Cardiac septum (tissue), 1 donor: ENCODE measurements at regions of chr10 and their contacts with region 1.

Region 1: DNA sequence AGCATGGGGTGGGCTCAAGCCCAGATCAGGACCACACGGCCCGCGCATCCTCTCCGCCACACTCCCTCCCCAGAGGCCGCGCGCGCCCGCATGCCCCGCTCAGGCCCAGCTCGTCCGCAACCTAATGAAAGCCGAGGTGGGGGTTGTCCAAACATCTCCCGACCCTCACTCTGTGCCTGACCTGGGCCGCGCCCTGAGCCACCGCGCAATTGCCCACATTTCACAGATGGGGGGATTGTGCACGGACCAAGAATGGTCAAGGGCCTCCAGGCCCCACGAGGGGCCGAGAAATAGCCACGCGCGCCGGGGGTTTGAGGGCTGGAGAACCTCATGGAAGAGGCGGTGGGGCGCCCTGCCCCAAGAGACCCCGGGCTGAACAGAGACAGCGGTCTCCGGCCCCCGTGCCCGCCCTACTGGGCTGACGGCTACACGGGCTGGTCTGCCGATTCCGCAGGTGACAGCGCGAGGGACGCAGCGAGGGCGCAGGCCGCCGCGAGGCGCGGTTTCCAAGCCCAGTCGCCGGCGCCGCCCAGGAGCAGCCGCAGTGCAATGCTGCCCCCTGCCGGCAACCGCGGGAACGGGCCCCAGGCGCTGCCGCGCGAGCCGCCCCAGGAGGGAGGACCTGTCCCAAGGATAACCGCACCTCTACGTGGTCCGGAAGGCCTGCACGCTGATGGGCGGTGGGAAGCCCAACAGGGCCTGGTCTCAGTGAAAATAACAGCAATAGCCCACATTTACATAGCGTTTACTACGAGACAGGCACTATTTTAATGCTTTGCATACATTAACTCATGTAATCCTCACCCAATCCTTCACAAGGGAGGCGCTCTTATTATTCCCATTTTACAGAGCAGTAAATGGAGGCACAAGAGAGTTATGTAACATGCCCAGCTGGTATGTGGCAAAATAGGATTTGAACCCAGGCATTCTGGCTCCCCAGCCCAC is 10.5 kb upstream of the GRID1 start:
- DNase-seq: peak; percentile 89

Region 2: GRCh38 chr10:85548034-85548433 is 829.1 kb before region 1 on chr10:
- intact Hi-C with region 1: loop called (anchors 10 kb)
- DNase-seq: no peak

Region 3: DNA sequence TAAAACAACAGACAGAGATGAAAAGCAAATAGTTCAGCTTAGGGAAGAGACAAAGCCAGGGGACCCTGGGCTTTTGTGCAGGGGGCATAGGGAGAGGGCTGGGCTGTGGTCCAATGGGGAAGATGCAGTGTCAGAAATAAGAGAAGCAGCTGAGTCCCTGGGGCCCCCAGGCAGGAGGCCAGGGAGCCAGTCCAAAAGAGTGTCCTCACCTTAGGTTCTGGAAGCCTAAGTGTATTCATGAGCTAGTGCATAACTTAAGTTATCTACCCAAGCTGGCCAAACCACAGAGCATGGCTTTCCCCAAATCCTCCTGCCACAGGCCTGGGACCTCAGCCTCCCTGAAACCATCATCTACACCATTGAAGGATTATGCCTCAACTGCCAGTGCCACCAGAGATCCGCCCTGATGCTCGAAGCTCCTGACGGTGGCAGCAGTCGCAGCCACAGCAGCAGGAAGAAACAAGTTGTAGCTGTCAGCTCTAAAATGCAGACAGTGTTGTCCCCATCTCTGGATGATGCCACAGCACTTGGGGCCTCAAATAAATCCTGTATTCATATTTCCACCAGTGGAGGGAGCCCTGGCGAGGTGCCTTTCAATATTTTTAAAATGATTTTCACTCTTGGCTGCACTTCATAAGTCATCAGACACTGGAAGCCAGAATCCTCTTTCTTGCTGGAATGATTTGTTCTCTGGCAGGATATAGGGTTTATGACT is 585.1 kb before region 1 on chr10:
- intact Hi-C with region 1: loop called (anchors 5 kb)
- DNase-seq: no peak

Region 4: DNA sequence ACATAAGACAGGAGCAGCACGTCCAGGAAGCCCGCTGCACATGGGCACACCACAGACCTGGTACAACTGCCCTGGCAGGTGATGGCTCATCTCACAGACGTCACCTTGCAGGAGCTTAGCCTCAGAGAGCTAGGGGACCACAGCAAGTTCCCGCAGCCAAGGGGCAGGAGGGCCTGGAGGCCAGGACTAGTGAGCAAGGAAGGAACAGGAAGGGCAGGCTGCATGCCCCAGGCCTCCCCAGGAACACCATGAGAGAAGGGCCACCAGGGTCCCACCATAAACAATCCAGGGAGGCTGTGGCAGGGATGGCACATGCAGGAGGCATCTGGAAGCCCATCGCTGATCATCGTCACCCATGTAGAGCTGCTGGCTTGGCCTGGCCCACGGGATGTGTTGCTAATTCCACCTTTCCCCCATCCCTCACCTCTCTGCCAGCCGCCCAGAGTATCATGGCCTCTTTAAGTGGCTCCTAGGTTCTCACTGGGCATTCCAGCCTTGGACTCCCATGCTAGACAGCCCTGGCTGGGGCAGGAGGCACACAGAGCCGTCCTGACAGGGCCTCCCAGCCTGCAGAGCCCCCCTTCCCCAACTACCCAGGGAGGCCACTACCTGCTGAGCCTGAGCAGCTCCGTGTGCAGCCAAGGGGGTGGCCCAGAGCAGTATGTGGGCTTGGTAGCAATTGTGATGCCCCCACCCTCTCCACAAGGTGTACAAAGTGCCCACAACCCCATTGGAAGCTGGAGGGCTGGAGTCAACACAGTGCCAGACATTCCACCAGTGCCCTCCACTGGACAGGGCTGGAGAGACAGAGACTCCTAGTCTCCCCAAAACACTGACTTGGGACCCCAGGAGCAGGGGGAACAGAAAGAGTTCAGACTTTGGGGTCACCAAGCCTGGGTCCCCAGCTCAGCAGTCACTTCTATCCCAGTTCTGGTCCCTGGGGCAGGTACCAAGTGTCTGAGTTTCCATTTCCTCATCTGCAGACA is 46.1 kb before region 1 on chr10:
- intact Hi-C with region 1: no loop called
- DNase-seq: no peak